MCF 10A (cell line): ENCODE measurements at regions of chr5 and their contacts with region 1.

Region 1: DNA sequence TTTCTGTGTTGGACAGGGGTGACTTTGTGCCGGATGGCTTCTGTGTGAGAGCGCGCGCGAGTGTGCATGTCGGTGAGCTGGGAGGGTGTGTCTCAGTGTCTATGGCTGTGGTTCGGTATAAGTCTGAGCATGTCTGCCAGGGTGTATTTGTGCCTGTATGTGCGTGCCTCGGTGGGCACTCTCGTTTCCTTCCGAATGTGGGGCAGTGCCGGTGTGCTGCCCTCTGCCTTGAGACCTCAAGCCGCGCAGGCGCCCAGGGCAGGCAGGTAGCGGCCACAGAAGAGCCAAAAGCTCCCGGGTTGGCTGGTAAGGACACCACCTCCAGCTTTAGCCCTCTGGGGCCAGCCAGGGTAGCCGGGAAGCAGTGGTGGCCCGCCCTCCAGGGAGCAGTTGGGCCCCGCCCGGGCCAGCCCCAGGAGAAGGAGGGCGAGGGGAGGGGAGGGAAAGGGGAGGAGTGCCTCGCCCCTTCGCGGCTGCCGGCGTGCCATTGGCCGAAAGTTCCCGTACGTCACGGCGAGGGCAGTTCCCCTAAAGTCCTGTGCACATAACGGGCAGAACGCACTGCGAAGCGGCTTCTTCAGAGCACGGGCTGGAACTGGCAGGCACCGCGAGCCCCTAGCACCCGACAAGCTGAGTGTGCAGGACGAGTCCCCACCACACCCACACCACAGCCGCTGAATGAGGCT is at the start of gene ADRB2:
- DNase-seq: peak; percentile 99
- H3K4me3 Mint-ChIP-seq: peak within 1 kb of the TSS; percentile 90
- H3K27ac Mint-ChIP-seq: peak within 1 kb of the TSS; percentile 91
- H3K4me1 Mint-ChIP-seq: peaks cover 44% of the 10 kb centered on the region
- H3K27me3 Mint-ChIP-seq: no peaks in the 10 kb centered on the region
- CTCF ChIP-seq: no peak
- total RNA-seq, gene ADRB2: 6.9 and 9.5 TPM in 2 replicates

Region 2: DNA sequence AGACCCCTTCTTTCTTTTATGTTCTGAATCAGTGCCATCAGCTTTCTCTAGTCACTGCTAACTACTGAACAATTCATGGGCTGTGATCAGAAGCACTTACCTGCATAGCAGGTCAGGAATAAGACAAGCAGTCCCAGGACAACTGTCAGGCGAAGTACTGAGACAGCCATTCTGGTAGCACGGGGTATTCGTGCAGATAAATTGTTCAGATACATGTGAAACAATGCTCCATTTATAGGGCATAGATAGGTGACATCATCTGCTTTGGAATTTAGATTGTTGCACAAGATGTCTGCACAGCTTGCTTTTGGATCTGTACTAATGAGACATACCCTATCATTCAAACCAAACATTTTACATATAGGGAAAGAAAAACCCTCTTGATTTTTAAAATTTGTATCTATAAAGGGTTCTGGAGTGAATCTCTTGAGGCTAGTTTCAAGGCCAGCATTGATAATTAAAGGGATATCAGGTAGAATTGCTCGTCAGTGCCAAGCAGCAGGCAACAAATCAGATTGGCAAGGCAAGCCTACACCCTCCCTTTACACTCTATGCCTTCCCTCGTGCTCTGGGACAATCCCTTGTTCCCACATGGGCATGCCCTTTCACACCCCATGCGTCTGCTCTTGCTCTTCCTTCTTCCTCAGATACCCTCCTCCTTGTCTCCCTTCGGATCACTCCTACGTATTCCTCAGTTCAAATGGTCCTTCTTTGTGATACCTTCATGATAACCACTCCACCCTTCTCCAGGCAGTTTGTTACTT is 919.7 kb before region 1 on chr5 and contains the start of gene C5orf46:
- CTCF ChIA-PET with region 1: no interaction called
- POLR2A ChIA-PET with region 1: no interaction called
- intact Hi-C with region 1: no loop called
- DNase-seq: peak; percentile 75
- H3K4me3 Mint-ChIP-seq: peak within 1 kb of the TSS; percentile 69
- H3K27ac Mint-ChIP-seq: peak within 1 kb of the TSS; percentile 85
- H3K4me1 Mint-ChIP-seq: peaks cover 39% of the 10 kb centered on the region
- H3K27me3 Mint-ChIP-seq: no peaks in the 10 kb centered on the region
- CTCF ChIP-seq: no peak
- total RNA-seq, gene C5orf46: 2.1 and 5.7 TPM in 2 replicates

Region 3: DNA sequence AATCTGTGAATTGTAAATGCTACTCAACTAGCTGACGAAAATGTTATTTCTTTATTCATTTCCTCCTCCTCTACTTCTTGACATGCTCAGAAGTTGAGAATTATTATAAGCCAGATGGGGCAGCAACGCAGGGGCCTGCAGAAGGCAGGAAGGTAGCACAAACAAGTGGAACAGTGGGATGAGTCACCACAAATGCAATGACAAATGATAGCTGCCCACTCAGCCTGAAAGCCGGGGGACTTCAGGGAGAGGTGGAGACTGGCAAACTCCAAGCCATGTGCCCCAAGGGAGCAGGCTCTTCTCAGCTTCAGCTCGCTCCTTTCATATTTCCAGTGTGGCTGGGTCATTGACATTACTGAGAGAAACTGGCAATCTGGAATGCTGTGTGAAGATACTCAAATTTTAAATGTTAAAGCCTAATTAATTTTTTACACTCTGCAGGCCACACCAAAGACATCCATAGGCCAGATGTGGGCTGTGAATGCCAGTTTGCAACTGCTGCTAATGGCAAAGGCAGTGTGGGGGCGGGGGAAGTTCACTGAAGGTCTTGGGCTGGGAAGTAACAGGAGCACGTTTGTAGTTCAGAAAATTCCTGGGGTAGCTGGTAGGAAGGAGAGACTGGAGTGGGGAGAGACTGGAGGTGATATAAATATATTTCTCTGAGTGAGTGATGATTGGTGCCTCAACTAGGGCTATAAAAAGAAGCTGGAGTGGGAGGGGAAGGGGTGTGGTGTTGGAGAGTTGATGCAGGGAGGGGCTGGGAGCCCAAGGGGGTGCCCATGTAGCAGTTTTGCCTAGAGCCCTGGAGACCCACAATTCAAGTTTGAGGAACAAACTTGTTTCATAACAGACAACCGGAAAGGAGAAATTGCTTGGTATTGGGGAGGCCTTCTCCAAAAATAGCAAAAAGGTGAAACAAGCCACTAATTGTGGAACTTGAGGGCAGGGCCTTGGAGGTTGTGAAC is 20.6 kb before region 1 on chr5:
- CTCF ChIA-PET with region 1: interaction called, 35 read pairs
- POLR2A ChIA-PET with region 1: interaction called, 72 read pairs
- intact Hi-C with region 1: no loop called
- DNase-seq: peak; percentile 57
- H3K4me3 Mint-ChIP-seq: no peak overlapping the region
- H3K27ac Mint-ChIP-seq: no peak overlapping the region
- H3K4me1 Mint-ChIP-seq: peaks cover 36% of the 10 kb centered on the region
- H3K27me3 Mint-ChIP-seq: no peaks in the 10 kb centered on the region
- CTCF ChIP-seq: no peak

Region 4: GRCh38 chr5:148912714-148913398 is 86.7 kb after region 1 on chr5:
- CTCF ChIA-PET with region 1: interaction called, 67 read pairs
- POLR2A ChIA-PET with region 1: interaction called, 190 read pairs
- intact Hi-C with region 1: loop called (anchors 1 kb)
- DNase-seq: peak; percentile 98
- H3K4me3 Mint-ChIP-seq: peak overlapping the region; percentile 1
- H3K27ac Mint-ChIP-seq: peak overlapping the region; percentile 76
- H3K4me1 Mint-ChIP-seq: peaks cover 68% of the 10 kb centered on the region
- H3K27me3 Mint-ChIP-seq: no peaks in the 10 kb centered on the region
- CTCF ChIP-seq: peak; percentile 75

Region 5: DNA sequence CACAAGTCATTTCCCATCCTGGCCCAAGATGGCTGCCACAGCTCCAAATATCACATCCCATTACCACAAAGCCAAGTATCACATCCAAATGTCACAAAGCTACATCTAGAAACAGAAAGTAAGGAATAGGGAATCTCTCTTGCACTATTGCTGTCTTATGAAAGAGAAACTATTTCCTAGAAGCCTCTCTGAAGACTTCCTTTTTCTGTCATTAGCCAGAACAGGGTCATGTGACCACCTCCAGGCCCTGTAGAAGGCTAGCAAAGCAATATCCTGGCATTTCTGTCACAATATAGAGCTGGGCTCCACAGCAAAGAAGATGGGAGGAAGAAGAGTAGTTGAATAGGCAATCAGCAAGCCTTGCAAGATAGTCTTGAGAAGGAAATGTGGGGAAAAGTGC is 137.5 kb after region 1 on chr5:
- CTCF ChIA-PET with region 1: interaction called, 31 read pairs
- POLR2A ChIA-PET with region 1: interaction called, 136 read pairs
- intact Hi-C with region 1: no loop called
- DNase-seq: no peak
- H3K4me3 Mint-ChIP-seq: no peak overlapping the region
- H3K27ac Mint-ChIP-seq: peak overlapping the region; percentile 57
- H3K4me1 Mint-ChIP-seq: peaks cover 58% of the 10 kb centered on the region
- H3K27me3 Mint-ChIP-seq: no peaks in the 10 kb centered on the region
- CTCF ChIP-seq: no peak

Region 6: DNA sequence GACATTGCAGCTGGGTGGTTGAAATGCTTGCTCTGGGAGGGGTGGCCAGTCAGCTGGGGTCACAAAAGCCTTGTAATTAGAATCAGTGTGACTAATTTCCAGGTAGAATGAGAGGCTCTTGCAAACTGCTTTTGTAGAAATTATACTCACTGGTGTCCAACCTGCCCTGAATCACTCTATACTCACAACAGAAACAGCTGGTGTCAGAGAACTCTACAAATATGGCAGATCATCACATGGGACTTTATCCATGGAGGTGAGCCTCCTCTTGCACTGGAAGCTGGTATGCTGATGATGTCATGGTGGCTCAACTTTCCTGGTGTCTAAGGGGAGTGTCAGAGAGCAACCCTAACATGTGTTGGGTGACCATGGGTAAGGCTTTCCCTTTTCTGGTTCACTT is 165.4 kb after region 1 on chr5:
- CTCF ChIA-PET with region 1: interaction called, 150 read pairs
- POLR2A ChIA-PET with region 1: interaction called, 255 read pairs
- intact Hi-C with region 1: no loop called
- DNase-seq: no peak
- H3K4me3 Mint-ChIP-seq: no peak overlapping the region
- H3K27ac Mint-ChIP-seq: no peak overlapping the region
- H3K4me1 Mint-ChIP-seq: peaks cover 42% of the 10 kb centered on the region
- H3K27me3 Mint-ChIP-seq: no peaks in the 10 kb centered on the region
- CTCF ChIP-seq: no peak